ENCODE measurements at regions of chr4 and their contacts with region 1.

Region 1: GRCh38 chr4:183411231-183411861 is 33.1 kb upstream of the CDKN2AIP start:
- DNase-seq: no peak

Region 2: GRCh38 chr4:183229397-183229796 is 181.9 kb before region 1 on chr4:
- CTCF ChIA-PET with region 1: no interaction called
- POLR2A ChIA-PET with region 1: no interaction called
- DNase-seq: no peak

Region 3: GRCh38 chr4:183398227-183399125 is 12.9 kb before region 1 on chr4:
- CTCF ChIA-PET with region 1: interaction called, 8 read pairs
- POLR2A ChIA-PET with region 1: interaction called, 11 read pairs
- DNase-seq: peak; percentile 71

Measured in HEK293T (cell line).